Body of pancreas (tissue), 4 donors: ENCODE measurements at regions of chr6 and their contacts with region 1.

Region 1: GRCh38 chr6:156309017-156309416 is 468.2 kb upstream of the ARID1B start:
- DNase-seq: no peak
- ATAC-seq: no peak
- H3K4me3 ChIP-seq: no peak overlapping the region
- H3K27ac ChIP-seq: no peak overlapping the region
- H3K4me1 ChIP-seq: no peaks in the 10 kb centered on the region
- H3K27me3 ChIP-seq: no peaks in the 10 kb centered on the region
- CTCF ChIP-seq: no peak
- POLR2A ChIP-seq: no peak

Region 2: DNA sequence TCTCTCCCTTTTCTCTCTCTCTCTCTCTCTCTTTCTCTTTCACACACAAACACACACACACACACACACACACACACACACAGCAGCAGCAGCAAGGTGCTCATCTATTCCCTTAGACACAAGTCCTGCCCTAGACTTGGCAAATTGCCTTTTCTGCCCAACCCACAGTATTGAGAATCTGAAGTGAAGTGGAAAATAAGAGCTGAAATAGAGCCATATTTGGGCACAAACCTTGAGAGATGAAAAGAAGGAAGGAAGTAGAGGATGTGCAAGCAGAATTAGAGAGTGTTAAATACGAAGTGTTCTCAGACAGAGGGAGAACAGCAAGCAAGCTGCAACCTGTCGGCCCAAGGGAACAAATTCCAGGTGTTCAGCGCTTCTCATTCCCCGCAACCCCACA is 295.9 kb before region 1 on chr6:
- intact Hi-C with region 1: no loop called
- DNase-seq: no peak
- ATAC-seq: no peak
- H3K4me3 ChIP-seq: no peak overlapping the region
- H3K27ac ChIP-seq: no peak overlapping the region
- H3K4me1 ChIP-seq: no peaks in the 10 kb centered on the region
- H3K27me3 ChIP-seq: no peaks in the 10 kb centered on the region
- CTCF ChIP-seq: no peak
- POLR2A ChIP-seq: no peak

Region 3: GRCh38 chr6:156427345-156427744 is 118.3 kb after region 1 on chr6:
- intact Hi-C with region 1: loop called (anchors 5 kb)
- DNase-seq: peak in 1 of 4 donors; percentile 16
- ATAC-seq: peak; percentile 30
- H3K4me3 ChIP-seq: no peak overlapping the region
- H3K27ac ChIP-seq: no peak overlapping the region
- H3K4me1 ChIP-seq: no peaks in the 10 kb centered on the region
- H3K27me3 ChIP-seq: no peaks in the 10 kb centered on the region
- CTCF ChIP-seq: no peak
- POLR2A ChIP-seq: no peak